ENCODE measurements at regions of chr15 and their contacts with region 1.

Region 1: GRCh38 chr15:80695104-80695910 is at the start of gene ABHD17C:
- DNase-seq: peak; percentile 72
- H3K4me3 ChIP-seq: peak within 1 kb of the TSS; percentile 63 to 83 (median 74)
- H3K27ac ChIP-seq: peak within 1 kb of the TSS; percentile 86 to 91 (median 88)
- H3K4me1 ChIP-seq: peaks cover 0 to 28% (median 25%) of the 10 kb centered on the region in 4 donors
- H3K27me3 ChIP-seq: no peaks in the 10 kb centered on the region
- CTCF ChIP-seq: no peak
- EP300 ChIP-seq: no peak
- POLR2A ChIP-seq: no peak
- total RNA-seq, gene ABHD17C: 2.0 to 4.2 (median 2.6) TPM

Region 2: GRCh38 chr15:80455668-80456442 is 239.5 kb before region 1 on chr15:
- intact Hi-C with region 1: loop called (anchors 5 kb)
- DNase-seq: peak; percentile 74
- H3K4me3 ChIP-seq: no peak overlapping the region
- H3K27ac ChIP-seq: no peak overlapping the region
- H3K4me1 ChIP-seq: peaks cover 0 to 18% (median 9%) of the 10 kb centered on the region in 4 donors
- H3K27me3 ChIP-seq: no peaks in the 10 kb centered on the region
- CTCF ChIP-seq: peak; percentile 68 to 89 (median 88)
- EP300 ChIP-seq: no peak
- POLR2A ChIP-seq: no peak

Region 3: DNA sequence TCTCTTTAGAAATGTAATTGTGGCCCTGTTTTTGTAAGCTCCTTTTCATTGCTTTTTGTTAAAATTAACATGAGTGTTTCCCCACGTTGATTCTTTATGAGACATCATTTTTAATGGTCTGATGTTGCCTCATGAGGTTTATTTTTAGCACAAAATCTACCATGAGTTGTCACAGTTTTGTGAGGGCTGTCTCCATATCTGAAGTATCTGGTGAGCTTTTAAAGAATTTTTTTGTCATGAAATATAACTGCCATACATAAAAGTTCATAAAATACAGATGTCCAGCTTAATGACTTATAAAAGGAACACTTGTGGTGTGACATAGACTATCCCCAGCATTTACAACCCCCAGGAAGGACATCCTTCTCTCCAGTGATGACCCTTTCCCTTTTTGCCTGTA is 49.5 kb after region 1 on chr15:
- intact Hi-C with region 1: loop called (anchors 5 kb)
- DNase-seq: no peak
- H3K4me3 ChIP-seq: no peak overlapping the region
- H3K27ac ChIP-seq: peak overlapping the region in 2 of 4 donors; percentile 33 to 38
- H3K4me1 ChIP-seq: peaks cover 0 to 13% (median 3%) of the 10 kb centered on the region in 4 donors
- H3K27me3 ChIP-seq: no peaks in the 10 kb centered on the region
- CTCF ChIP-seq: no peak
- EP300 ChIP-seq: no peak
- POLR2A ChIP-seq: no peak

Region 4: DNA sequence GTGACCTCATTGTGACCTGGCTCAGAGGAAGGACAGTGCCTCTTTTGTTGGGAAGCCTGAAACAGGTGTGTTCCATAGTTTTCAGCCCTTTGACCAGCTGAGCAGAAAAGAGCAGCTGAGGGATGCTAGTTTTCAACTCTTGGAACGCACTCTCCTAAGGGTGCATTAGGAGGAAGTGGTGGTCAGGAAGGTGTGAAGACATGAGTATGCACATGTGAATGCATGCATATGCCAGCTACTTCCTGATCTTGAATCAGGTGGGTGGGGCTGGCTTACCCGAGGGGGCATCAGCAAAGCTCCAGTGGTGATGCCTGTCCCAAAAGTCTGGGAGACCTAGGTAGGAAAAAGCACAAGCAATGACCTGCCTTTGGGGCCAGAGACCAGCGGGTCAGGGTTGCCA is 60.6 kb after region 1 on chr15:
- intact Hi-C with region 1: no loop called
- DNase-seq: no peak
- H3K4me3 ChIP-seq: no peak overlapping the region
- H3K27ac ChIP-seq: no peak overlapping the region
- H3K4me1 ChIP-seq: peaks cover 0 to 12% (median 0%) of the 10 kb centered on the region in 4 donors
- H3K27me3 ChIP-seq: no peaks in the 10 kb centered on the region
- CTCF ChIP-seq: no peak
- EP300 ChIP-seq: no peak
- POLR2A ChIP-seq: no peak

Region 5: DNA sequence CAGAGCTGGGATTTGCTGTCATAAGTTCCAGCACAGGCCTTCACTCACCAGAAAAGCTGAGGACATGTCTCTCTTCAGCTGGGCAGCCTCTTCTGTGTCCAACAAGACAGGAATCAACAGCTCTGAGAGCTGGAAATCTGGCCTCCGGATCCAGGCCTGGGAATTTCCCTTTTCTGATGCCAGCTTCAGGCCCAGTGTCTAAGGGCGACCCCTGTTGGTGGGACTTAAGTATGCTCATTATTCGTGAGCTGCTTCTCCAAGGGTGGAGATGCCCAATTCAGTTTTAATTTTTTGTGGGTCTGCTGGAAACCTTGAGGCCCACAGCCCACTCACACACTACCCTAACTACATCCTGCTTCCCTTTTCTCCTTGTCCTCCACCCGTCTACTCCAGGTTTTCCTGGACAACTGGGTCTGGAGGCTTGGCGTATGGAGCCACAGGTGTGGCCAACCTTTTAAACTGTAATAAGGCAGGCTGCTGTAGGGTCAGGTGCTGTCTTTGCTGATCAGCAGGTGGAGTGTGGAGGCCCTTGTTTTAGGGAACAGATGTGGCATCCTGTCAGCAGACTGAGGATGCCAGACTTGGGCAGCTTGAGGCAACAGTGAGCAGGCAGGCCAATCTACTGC is 81.2 kb after region 1 on chr15:
- intact Hi-C with region 1: loop called (anchors 10 kb)
- DNase-seq: peak; percentile 82
- H3K4me3 ChIP-seq: no peak overlapping the region
- H3K27ac ChIP-seq: no peak overlapping the region
- H3K4me1 ChIP-seq: peaks cover 0 to 30% (median 24%) of the 10 kb centered on the region in 4 donors
- H3K27me3 ChIP-seq: peaks cover 0 to 25% (median 4%) of the 10 kb centered on the region in 3 donors
- CTCF ChIP-seq: peak; percentile 65 to 83 (median 82)
- EP300 ChIP-seq: no peak
- POLR2A ChIP-seq: no peak

Region 6: DNA sequence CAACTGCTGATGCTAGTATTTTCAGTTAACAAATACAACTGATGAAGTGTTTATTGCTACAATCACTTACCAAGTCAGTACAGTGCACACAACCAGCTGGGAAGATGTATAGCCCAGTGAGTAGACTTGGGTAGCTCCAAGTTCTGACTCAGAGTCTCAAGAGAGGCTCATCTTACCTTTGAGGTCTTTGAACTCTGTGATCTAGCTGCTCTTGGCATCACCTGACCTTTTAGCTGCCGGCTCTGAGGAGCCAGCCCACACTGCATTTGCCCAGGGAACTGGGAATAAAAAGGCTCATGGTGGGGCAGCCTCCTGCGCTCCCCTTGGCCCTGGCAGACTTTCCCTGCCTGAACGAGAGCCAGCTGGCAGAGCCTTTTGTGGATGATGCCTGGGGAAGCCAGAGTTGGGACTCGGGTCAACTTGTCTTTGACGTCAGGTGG is 166.4 kb after region 1 on chr15:
- intact Hi-C with region 1: no loop called
- DNase-seq: peak; percentile 74
- H3K4me3 ChIP-seq: no peak overlapping the region
- H3K27ac ChIP-seq: peak overlapping the region in 2 of 4 donors; percentile 46 to 51
- H3K4me1 ChIP-seq: peaks cover 0 to 28% (median 24%) of the 10 kb centered on the region in 4 donors
- H3K27me3 ChIP-seq: no peaks in the 10 kb centered on the region
- CTCF ChIP-seq: no peak
- EP300 ChIP-seq: no peak
- POLR2A ChIP-seq: no peak

Region 7: GRCh38 chr15:80934761-80935221 is 239.5 kb after region 1 on chr15:
- intact Hi-C with region 1: loop called (anchors 10 kb)
- DNase-seq: no peak
- H3K4me3 ChIP-seq: no peak overlapping the region
- H3K27ac ChIP-seq: peak overlapping the region in 3 of 4 donors; percentile 69 to 89 (median 76)
- H3K4me1 ChIP-seq: peaks cover 0 to 65% (median 56%) of the 10 kb centered on the region in 4 donors
- H3K27me3 ChIP-seq: no peaks in the 10 kb centered on the region
- CTCF ChIP-seq: no peak
- EP300 ChIP-seq: no peak
- POLR2A ChIP-seq: no peak

Region 8: DNA sequence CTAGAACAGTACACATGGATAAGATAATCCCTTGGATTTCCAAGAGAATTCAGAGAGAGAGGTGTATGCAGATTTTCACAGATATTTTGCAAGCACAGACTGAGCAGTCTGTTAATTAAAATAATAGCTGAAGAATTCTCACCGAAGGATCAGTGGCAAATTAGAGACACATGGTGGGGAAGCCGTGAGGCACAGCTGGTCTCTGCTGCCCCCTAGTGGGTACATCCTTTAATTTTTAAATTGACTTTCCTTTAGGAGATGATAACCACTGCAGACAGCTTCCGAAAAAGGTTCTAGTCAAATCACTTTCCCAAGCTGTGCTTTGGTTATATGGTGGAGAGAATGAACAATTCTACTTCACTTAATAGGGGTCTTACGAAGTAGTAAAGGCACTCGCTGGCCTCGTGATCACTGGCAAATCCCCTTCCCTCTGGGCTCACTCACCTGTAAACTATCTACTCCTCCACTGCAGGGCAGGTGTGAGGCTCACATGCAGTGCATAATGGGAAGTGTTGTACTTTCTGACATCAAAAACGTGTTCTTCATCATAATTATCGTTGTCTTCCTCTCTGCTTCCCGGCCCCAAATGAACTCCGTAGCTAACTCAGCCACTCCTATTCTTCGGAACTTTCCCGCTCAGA is 274.8 kb after region 1 on chr15:
- intact Hi-C with region 1: loop called (anchors 10 kb)
- DNase-seq: no peak
- H3K4me3 ChIP-seq: no peak overlapping the region
- H3K27ac ChIP-seq: no peak overlapping the region
- H3K4me1 ChIP-seq: peaks cover 0 to 24% (median 16%) of the 10 kb centered on the region in 4 donors
- H3K27me3 ChIP-seq: no peaks in the 10 kb centered on the region
- CTCF ChIP-seq: peak; percentile 53 to 88 (median 76)
- EP300 ChIP-seq: no peak
- POLR2A ChIP-seq: no peak